HCT116 (cell line): ENCODE measurements at regions of chr17 and their contacts with region 1.

Region 1: GRCh38 chr17:78360371-78361224 is 721 bp upstream of the SOCS3 start:
- DNase-seq: peak; percentile 85
- ATAC-seq: peak; percentile 84
- H3K4me3 ChIP-seq: peak overlapping the region; percentile 86 to 96
- H3K27ac ChIP-seq: peak overlapping the region; percentile 99
- H3K4me1 ChIP-seq: peaks cover 8 to 54% of the 10 kb centered on the region in 2 experiments; a peak in 3 of 4 replicates
- H3K27me3 ChIP-seq: no peaks in the 10 kb centered on the region
- CTCF ChIP-seq: peak; percentile 93 to 99 (median 98); a peak in 5 of 6 replicates
- POLR2A ChIP-seq: no peak
- RAD21 ChIP-seq: peak; percentile 92

Region 2: DNA sequence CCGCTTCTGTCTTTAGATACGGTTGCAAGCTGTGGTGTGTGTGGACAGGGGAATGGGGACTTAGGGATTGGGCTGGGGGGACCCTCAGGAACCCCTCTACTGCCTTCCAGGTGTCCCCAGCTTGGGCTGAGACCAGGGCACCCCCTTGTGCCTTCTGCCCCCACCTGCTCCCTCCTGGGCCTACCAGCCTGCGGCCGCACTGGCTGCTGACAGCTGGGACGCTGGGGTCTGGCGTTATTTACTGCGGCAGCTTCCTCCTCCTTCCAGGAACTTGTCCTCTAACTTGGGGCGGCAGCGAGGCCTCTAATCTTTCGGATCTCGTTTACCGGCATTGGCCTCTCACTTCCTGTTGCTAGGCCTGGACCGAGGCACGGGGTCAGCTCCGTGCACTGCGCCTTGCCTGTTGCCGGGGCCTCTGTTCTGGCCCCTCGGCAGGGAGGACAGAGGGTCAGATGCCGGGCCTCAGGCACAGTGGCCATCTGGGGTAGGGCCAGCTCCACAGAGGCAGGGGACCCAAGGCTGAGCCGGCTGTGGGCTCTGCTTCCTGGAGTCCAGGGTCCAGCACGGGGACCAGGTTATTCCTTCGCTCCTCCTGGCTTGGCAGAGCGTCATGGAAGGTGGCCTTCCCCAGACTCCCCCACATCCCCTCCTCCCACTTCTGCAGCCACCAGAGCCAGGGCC is 97.4 kb before region 1 on chr17:
- CTCF ChIA-PET with region 1: no interaction called
- POLR2A ChIA-PET with region 1: no interaction called
- RAD21 ChIA-PET with region 1: no interaction called
- intact Hi-C with region 1: no loop called
- DNase-seq: no peak
- ATAC-seq: no peak
- H3K4me3 ChIP-seq: no peak overlapping the region
- H3K27ac ChIP-seq: no peak overlapping the region
- H3K4me1 ChIP-seq: no peaks in the 10 kb centered on the region
- H3K27me3 ChIP-seq: no peaks in the 10 kb centered on the region
- CTCF ChIP-seq: no peak
- POLR2A ChIP-seq: no peak
- RAD21 ChIP-seq: no peak

Region 3: DNA sequence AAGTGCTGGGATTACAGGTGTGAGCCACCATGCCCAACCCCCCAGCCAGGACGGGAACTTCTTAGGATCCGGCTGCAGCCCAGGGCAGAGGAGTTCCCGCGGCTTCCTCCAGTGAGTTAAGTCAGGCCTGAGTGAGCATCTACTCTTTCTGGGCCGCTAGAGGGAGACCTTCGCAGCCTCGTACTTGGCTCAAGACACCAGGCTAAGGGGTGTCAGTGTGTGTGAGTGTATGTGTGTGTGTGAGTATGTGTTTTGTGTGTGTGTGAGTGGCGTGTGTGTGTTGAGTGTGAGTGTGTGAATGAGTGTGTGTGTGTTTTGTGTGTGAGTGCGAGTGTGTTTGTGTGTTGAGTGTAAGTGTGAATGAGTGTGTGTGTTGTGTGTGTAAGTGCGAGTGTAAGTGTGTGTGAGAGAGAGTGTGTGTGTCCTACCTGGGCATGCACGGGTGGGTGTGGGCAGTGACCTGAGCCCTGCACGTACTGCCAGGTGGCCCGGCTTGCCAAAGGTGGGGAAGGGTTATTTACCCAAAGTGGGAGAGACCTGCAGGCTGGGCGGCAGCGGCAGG is 70.7 kb before region 1 on chr17:
- CTCF ChIA-PET with region 1: interaction called, 6 read pairs
- POLR2A ChIA-PET with region 1: interaction called, 4 read pairs
- RAD21 ChIA-PET with region 1: interaction called in 1 of 2 experiments, 3 read pairs
- intact Hi-C with region 1: loop called (anchors 5 kb)
- DNase-seq: peak; percentile 88
- ATAC-seq: peak; percentile 99
- H3K4me3 ChIP-seq: no peak overlapping the region
- H3K27ac ChIP-seq: no peak overlapping the region
- H3K4me1 ChIP-seq: peaks cover 2 to 22% of the 10 kb centered on the region in 2 experiments; a peak in 2 of 4 replicates
- H3K27me3 ChIP-seq: no peaks in the 10 kb centered on the region
- CTCF ChIP-seq: peak; percentile 92 to 98 (median 92)
- POLR2A ChIP-seq: no peak
- RAD21 ChIP-seq: peak; percentile 95

Region 4: GRCh38 chr17:78313735-78314648 is 46.6 kb before region 1 on chr17:
- CTCF ChIA-PET with region 1: interaction called, 15 read pairs
- POLR2A ChIA-PET with region 1: interaction called, 21 read pairs
- RAD21 ChIA-PET with region 1: interaction called, 6 to 9 read pairs
- intact Hi-C with region 1: loop called (anchors 2 kb)
- DNase-seq: peak; percentile 92
- ATAC-seq: peak; percentile 74
- H3K4me3 ChIP-seq: peak overlapping the region; percentile 32 to 57
- H3K27ac ChIP-seq: peak overlapping the region; percentile 99
- H3K4me1 ChIP-seq: peaks cover 52 to 83% of the 10 kb centered on the region in 2 experiments
- H3K27me3 ChIP-seq: no peaks in the 10 kb centered on the region
- CTCF ChIP-seq: no peak
- POLR2A ChIP-seq: peak; percentile 93
- RAD21 ChIP-seq: no peak

Region 5: GRCh38 chr17:78341559-78342448 is 18.8 kb before region 1 on chr17:
- CTCF ChIA-PET with region 1: interaction called, 13 read pairs
- POLR2A ChIA-PET with region 1: interaction called, 14 read pairs
- RAD21 ChIA-PET with region 1: interaction called, 3 to 8 read pairs
- intact Hi-C with region 1: loop called (anchors 1 kb)
- DNase-seq: no peak
- ATAC-seq: peak; percentile 43
- H3K4me3 ChIP-seq: peak overlapping the region; percentile 42 to 62
- H3K27ac ChIP-seq: peak overlapping the region; percentile 98
- H3K4me1 ChIP-seq: peaks cover 54 to 98% of the 10 kb centered on the region in 2 experiments
- H3K27me3 ChIP-seq: no peaks in the 10 kb centered on the region
- CTCF ChIP-seq: no peak
- POLR2A ChIP-seq: no peak
- RAD21 ChIP-seq: no peak

Region 6: DNA sequence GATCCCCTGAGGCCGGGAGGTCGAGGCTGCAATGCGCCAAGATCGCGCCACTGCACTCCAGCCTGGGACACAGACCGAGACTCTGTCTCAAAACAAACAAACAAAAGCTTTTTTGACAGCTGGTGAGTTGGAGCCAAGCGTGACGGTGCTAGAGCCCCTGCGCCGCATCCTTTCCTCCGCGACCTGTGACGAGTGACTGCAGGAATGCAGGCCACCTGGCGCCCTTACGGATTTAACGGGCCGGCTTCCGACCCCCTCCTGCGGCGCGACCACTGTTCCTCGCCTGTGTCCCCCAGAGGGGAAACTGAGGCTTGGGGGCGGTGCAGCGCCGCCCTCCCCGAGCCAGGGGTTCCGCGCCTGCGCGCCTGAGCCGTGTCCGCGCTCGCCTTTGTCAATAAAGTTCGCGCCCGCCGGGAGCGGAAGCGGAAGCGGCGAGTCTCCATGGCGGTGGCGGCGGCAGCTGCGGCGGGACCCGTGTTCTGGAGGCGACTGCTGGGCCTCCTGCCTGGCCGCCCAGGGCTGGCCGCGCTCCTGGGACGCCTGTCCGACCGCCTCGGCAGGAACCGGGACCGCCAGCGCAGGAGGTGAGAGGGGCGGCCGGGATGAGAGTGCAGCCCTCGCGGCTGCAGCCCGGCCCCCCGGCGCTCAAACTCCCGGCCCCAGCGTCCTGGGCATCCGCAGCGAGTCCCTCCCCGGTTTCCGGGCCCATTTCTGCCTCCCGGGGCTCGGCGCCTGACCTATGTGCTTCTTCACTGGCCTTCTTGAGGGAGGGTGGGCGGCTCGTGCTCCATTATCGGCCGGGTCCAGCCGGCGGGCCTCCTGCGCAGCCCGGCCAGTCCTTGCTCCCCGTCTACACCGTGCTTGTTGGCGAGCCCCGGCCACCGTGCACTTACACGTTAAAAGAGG is 17.9 kb after region 1 on chr17 and contains the start of gene PGS1:
- CTCF ChIA-PET with region 1: interaction called, 11 read pairs
- POLR2A ChIA-PET with region 1: interaction called, 6 read pairs
- RAD21 ChIA-PET with region 1: no interaction called
- intact Hi-C with region 1: loop called (anchors 1 kb)
- DNase-seq: peak; percentile 49
- ATAC-seq: peak; percentile 87
- H3K4me3 ChIP-seq: peak within 1 kb of the TSS; percentile 62 to 86
- H3K27ac ChIP-seq: peak within 1 kb of the TSS; percentile 63
- H3K4me1 ChIP-seq: peaks cover 16 to 36% of the 10 kb centered on the region in 2 experiments
- H3K27me3 ChIP-seq: no peaks in the 10 kb centered on the region
- CTCF ChIP-seq: no peak
- POLR2A ChIP-seq: peak; percentile 57
- RAD21 ChIP-seq: no peak
- total RNA-seq, gene PGS1: 44.4 TPM

Region 7: GRCh38 chr17:78421484-78422266 is 61.1 kb after region 1 on chr17:
- CTCF ChIA-PET with region 1: interaction called, 28 read pairs
- POLR2A ChIA-PET with region 1: interaction called, 9 read pairs
- RAD21 ChIA-PET with region 1: interaction called in 1 of 2 experiments, 9 read pairs
- intact Hi-C with region 1: loop called (anchors 1 kb)
- DNase-seq: peak; percentile 51
- ATAC-seq: peak; percentile 95
- H3K4me3 ChIP-seq: no peak overlapping the region
- H3K27ac ChIP-seq: no peak overlapping the region
- H3K4me1 ChIP-seq: no peaks in the 10 kb centered on the region
- H3K27me3 ChIP-seq: no peaks in the 10 kb centered on the region
- CTCF ChIP-seq: peak; percentile 98 to 100 (median 100)
- POLR2A ChIP-seq: no peak
- RAD21 ChIP-seq: peak; percentile 98

Region 8: DNA sequence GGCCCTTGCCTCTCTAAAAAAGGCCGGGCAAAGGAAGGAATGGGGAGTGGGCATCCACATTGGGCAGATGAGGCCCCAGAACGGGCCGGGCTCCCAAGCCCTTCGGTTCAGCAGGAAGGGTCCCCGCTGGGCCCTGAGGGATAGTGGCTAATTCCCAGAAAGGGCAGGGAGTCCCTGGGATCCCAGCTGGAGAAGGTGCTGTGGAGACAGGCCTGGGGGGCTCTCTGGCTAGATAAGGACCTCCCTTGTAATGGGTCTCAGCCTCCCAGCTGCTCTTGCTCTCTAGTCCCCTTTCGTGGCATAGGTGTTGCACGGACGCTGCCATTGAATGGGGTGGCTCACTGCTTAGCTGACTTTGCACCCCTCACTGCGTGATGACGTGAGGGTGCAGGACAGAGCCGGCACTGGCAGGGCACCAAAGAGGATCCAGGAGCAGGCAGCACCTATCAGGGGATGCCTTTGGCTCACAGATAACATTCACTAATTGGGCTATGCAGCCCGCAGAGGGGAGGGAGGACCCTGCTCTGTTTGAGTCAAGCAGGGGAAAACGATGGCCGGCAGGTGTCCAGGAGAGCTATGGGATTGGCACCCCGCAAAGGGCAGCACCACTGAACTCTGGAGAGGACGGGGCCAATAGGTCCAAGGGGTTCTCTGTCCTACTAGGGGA is 106.6 kb after region 1 on chr17:
- CTCF ChIA-PET with region 1: no interaction called
- POLR2A ChIA-PET with region 1: no interaction called
- RAD21 ChIA-PET with region 1: no interaction called
- intact Hi-C with region 1: no loop called
- DNase-seq: no peak
- ATAC-seq: no peak
- H3K4me3 ChIP-seq: no peak overlapping the region
- H3K27ac ChIP-seq: no peak overlapping the region
- H3K4me1 ChIP-seq: no peaks in the 10 kb centered on the region
- H3K27me3 ChIP-seq: no peaks in the 10 kb centered on the region
- CTCF ChIP-seq: no peak
- POLR2A ChIP-seq: no peak
- RAD21 ChIP-seq: no peak

Region 9: GRCh38 chr17:78708510-78708973 is 347.9 kb after region 1 on chr17:
- CTCF ChIA-PET with region 1: no interaction called
- POLR2A ChIA-PET with region 1: no interaction called
- RAD21 ChIA-PET with region 1: no interaction called
- intact Hi-C with region 1: loop called (anchors 5 kb)
- DNase-seq: peak; percentile 56
- ATAC-seq: peak; percentile 99
- H3K4me3 ChIP-seq: no peak overlapping the region
- H3K27ac ChIP-seq: no peak overlapping the region
- H3K4me1 ChIP-seq: peaks cover 8 to 14% of the 10 kb centered on the region in 2 experiments
- H3K27me3 ChIP-seq: no peaks in the 10 kb centered on the region
- CTCF ChIP-seq: peak; percentile 91 to 100 (median 96)
- POLR2A ChIP-seq: no peak
- RAD21 ChIP-seq: peak; percentile 98

Region 10: GRCh38 chr17:78722246-78722761 is 361.7 kb after region 1 on chr17:
- CTCF ChIA-PET with region 1: no interaction called
- POLR2A ChIA-PET with region 1: no interaction called
- RAD21 ChIA-PET with region 1: no interaction called
- intact Hi-C with region 1: no loop called
- DNase-seq: no peak
- ATAC-seq: no peak
- H3K4me3 ChIP-seq: no peak overlapping the region
- H3K27ac ChIP-seq: no peak overlapping the region
- H3K4me1 ChIP-seq: peaks cover 18 to 19% of the 10 kb centered on the region in 2 experiments
- H3K27me3 ChIP-seq: no peaks in the 10 kb centered on the region
- CTCF ChIP-seq: no peak
- POLR2A ChIP-seq: no peak
- RAD21 ChIP-seq: no peak